Body of pancreas (tissue), 4 donors: ENCODE measurements at regions of chr5 and their contacts with region 1.

Region 1: DNA sequence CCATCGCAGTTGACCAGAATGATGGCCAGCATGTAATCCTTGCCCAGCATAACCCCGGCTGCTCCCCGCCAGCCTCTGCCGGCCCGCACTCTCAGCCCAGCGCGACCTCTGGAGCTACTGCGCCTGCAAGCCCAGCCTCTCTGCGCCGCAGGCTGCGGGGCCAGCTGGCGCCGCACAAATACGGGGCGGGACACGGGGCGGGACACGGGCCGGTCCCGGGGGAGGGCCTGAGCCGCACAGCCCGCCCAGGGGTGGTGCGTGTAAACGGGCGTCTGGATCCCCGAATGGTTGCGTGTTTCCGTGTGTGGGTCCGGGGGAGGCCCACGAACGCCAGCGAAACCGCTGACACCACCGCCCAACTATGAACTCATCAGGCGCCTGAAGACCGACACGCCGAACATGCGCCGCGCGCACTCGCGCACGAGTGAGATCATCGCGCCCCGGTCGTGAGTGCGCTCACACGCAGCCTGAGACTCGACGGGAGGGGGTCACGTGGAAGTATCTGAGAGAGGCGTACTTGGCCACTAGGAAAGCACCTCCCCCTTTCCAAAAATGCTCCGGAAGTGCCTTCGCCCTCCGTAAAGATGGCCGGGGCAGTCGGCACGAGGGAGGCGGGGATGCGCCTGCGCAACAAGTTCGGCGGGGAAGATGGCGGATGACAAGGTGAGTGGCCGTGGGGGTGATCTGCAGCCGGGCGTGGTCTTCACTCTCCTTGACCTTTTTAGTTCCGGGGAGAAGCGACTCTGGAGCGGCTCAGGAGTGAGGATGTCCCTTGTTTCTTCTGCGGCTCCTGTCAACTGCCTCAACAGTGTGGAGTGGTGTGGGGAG is at the starts of genes APBB3 and SLC35A4:
- DNase-seq: peak; percentile 95 to 99 (median 96)
- ATAC-seq: peak; percentile 92
- H3K4me3 ChIP-seq: peak within 1 kb of the TSS; percentile 26 to 41
- H3K27ac ChIP-seq: peak within 1 kb of the TSS; percentile 87 to 93 (median 90)
- H3K4me1 ChIP-seq: peaks cover 36% of the 10 kb centered on the region
- H3K27me3 ChIP-seq: no peaks in the 10 kb centered on the region
- CTCF ChIP-seq: peak in 1 of 7 experiments; percentile 19
- POLR2A ChIP-seq: peak; percentile 93 to 96 (median 94)
- total RNA-seq, gene APBB3: 27.0 to 28.3 TPM
- total RNA-seq, gene SLC35A4: 18.5 to 39.4 TPM

Region 2: GRCh38 chr5:140524003-140524402 is 40.4 kb before region 1 on chr5:
- intact Hi-C with region 1: no loop called
- DNase-seq: no peak
- ATAC-seq: no peak
- H3K4me3 ChIP-seq: no peak overlapping the region
- H3K27ac ChIP-seq: no peak overlapping the region
- H3K4me1 ChIP-seq: no peaks in the 10 kb centered on the region
- H3K27me3 ChIP-seq: no peaks in the 10 kb centered on the region
- CTCF ChIP-seq: no peak
- POLR2A ChIP-seq: no peak

Region 3: GRCh38 chr5:140647042-140647341 is 82.6 kb after region 1 on chr5:
- intact Hi-C with region 1: loop called (anchors 10 kb)
- DNase-seq: no peak
- ATAC-seq: peak; percentile 8
- H3K4me3 ChIP-seq: peak overlapping the region; percentile 43 to 44
- H3K27ac ChIP-seq: peak overlapping the region; percentile 47 to 85 (median 70)
- H3K4me1 ChIP-seq: peaks cover 19% of the 10 kb centered on the region
- H3K27me3 ChIP-seq: no peaks in the 10 kb centered on the region
- CTCF ChIP-seq: no peak
- POLR2A ChIP-seq: no peak

Region 4: DNA sequence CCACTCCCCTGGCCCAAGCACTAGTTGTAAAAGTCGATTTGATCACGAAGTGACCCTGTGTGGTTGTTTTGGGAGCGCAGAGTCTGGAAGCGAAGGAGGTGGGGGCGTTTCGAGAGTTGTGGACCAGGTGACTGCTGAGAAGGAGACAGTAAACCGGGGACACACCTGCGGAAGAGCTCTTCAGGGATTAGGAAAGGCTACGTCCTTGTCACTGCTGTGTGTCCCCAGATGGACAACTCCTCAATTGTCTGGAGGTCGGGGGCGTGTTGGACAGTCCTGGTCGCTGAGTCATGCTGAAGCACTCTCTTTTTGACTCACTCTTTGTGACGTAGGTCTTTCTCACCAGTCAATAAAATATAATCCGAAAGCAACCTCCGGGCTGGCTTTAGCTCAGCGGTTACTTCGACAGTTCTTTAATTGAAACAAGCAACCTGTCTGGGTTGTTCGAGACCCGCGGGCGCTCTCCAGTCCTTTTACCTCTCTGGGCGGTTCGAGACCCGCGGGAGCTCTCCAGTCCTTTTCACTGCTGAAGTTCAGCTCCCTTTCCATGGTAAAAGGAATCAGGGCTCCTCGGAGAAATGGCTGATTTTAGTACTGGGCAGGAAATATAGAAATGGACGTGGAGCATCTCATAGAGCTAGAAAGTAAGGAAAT is 146.6 kb after region 1 on chr5:
- intact Hi-C with region 1: no loop called
- DNase-seq: peak; percentile 92 to 97 (median 94)
- ATAC-seq: peak; percentile 94
- H3K4me3 ChIP-seq: peak overlapping the region; percentile 13 to 36
- H3K27ac ChIP-seq: peak overlapping the region; percentile 84 to 93 (median 85)
- H3K4me1 ChIP-seq: no peaks in the 10 kb centered on the region
- H3K27me3 ChIP-seq: no peaks in the 10 kb centered on the region
- CTCF ChIP-seq: no peak
- POLR2A ChIP-seq: peak; percentile 38 to 73 (median 72)